ENCODE measurements at regions of chr16 and their contacts with region 1.

Region 1: GRCh38 chr16:62036101-62036801 is at the start of gene CDH8:
- DNase-seq: peak; percentile 93
- H3K4me3 ChIP-seq: peak within 1 kb of the TSS; percentile 64
- H3K27ac ChIP-seq: peak within 1 kb of the TSS; percentile 57
- H3K4me1 ChIP-seq: peaks cover 39% of the 10 kb centered on the region
- H3K27me3 ChIP-seq: no peaks in the 10 kb centered on the region
- CTCF ChIP-seq: no peak
- total RNA-seq, gene CDH8: 49.3 and 50.5 TPM in 2 replicates

Region 2: GRCh38 chr16:61432421-61432820 is 603.8 kb before region 1 on chr16:
- CTCF ChIA-PET with region 1: no interaction called
- POLR2A ChIA-PET with region 1: no interaction called
- intact Hi-C with region 1: loop called (anchors 5 kb)
- DNase-seq: peak; percentile 66
- H3K4me3 ChIP-seq: no peak overlapping the region
- H3K27ac ChIP-seq: no peak overlapping the region
- H3K4me1 ChIP-seq: no peaks in the 10 kb centered on the region
- H3K27me3 ChIP-seq: no peaks in the 10 kb centered on the region
- CTCF ChIP-seq: peak; percentile 59

Region 3: DNA sequence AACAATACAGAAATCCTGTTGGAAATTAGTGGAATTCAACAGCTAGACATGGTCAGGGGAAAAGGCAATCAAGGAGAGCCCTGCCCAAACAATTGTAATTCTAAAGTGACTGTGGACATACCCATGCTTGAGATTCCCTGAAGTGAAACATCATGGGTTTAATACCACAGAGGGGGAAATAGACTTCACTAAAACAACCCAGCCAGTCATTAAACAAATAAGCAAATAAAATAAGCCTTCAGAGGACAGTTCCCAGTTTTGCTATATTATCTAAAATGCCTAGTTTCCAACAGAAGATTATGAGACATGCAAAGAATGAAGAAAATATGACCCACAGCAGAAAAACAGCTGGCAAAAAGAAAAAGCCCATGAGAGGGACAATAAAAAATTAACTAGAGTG is 376.3 kb before region 1 on chr16:
- CTCF ChIA-PET with region 1: no interaction called
- POLR2A ChIA-PET with region 1: no interaction called
- intact Hi-C with region 1: loop called (anchors 10 kb)
- DNase-seq: no peak
- H3K4me3 ChIP-seq: no peak overlapping the region
- H3K27ac ChIP-seq: no peak overlapping the region
- H3K4me1 ChIP-seq: no peaks in the 10 kb centered on the region
- H3K27me3 ChIP-seq: no peaks in the 10 kb centered on the region
- CTCF ChIP-seq: no peak

Region 4: GRCh38 chr16:61862221-61863155 is 173.8 kb before region 1 on chr16:
- CTCF ChIA-PET with region 1: no interaction called
- POLR2A ChIA-PET with region 1: no interaction called
- intact Hi-C with region 1: loop called (anchors 5 kb)
- DNase-seq: no peak
- H3K4me3 ChIP-seq: no peak overlapping the region
- H3K27ac ChIP-seq: no peak overlapping the region
- H3K4me1 ChIP-seq: peaks cover 40% of the 10 kb centered on the region
- H3K27me3 ChIP-seq: no peaks in the 10 kb centered on the region
- CTCF ChIP-seq: no peak

Region 5: DNA sequence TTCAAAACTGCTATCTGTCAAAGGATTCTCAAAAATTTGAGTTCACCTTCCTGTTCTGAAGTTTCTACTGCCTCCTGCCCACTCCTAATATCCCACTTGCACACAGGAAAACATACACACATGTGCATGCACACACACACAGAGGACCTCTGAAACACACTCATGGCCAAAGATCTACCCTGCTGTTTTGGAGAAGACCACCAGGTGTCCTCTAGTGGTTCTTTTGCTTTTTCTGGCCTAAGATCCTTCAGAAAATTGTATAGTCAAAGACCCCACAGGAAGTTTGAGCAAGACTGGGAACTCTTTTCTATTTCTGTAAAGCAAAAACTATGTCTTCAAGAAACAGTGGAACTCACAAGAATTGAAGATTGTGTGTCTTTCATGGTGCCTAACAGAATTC is 90.2 kb before region 1 on chr16:
- CTCF ChIA-PET with region 1: no interaction called
- POLR2A ChIA-PET with region 1: no interaction called
- intact Hi-C with region 1: loop called (anchors 5 kb)
- DNase-seq: peak; percentile 38
- H3K4me3 ChIP-seq: no peak overlapping the region
- H3K27ac ChIP-seq: no peak overlapping the region
- H3K4me1 ChIP-seq: peaks cover 28% of the 10 kb centered on the region
- H3K27me3 ChIP-seq: no peaks in the 10 kb centered on the region
- CTCF ChIP-seq: peak; percentile 57

Region 6: DNA sequence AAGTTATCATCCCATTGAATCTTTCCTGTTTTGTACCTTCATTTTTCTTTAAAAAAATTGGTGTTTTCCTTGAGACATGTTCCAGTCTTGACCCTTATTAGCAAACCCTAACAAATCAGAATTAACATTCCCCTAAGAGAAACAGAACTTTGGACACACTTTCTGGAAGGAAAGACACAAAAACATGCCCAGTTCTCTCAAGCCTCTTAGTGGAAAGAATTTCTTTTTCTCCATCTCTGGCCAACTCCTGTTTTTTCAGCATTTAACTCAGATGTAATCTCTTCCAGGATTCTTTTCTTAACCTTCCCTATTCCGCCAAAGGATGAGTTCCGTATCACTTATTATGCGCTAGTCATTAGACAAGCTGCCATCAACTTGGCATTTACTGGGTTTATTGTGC is 23.8 kb after region 1 on chr16:
- CTCF ChIA-PET with region 1: no interaction called
- POLR2A ChIA-PET with region 1: no interaction called
- intact Hi-C with region 1: no loop called
- DNase-seq: no peak
- H3K4me3 ChIP-seq: no peak overlapping the region
- H3K27ac ChIP-seq: no peak overlapping the region
- H3K4me1 ChIP-seq: no peaks in the 10 kb centered on the region
- H3K27me3 ChIP-seq: no peaks in the 10 kb centered on the region
- CTCF ChIP-seq: no peak

Region 7: DNA sequence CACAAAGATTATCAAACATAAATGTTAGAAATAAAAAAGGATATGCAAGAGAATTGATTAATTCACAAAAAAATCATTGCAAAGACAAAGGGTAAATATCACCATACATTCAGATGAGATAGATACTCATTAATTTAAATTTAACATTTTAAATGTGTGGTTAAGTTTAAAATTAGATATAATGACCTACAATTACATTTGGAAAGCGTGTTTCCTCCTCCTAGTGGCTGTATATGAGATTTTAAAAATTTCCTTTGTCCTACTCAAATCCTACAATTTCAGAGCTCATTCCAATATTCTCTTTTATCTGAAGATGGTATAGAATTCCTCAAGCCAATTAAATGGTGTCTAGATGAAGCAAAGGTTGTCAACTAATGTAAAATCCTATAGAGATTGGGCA is 169.2 kb after region 1 on chr16:
- CTCF ChIA-PET with region 1: no interaction called
- POLR2A ChIA-PET with region 1: no interaction called
- intact Hi-C with region 1: no loop called
- DNase-seq: no peak
- H3K4me3 ChIP-seq: no peak overlapping the region
- H3K27ac ChIP-seq: no peak overlapping the region
- H3K4me1 ChIP-seq: no peaks in the 10 kb centered on the region
- H3K27me3 ChIP-seq: no peaks in the 10 kb centered on the region
- CTCF ChIP-seq: peak; percentile 36; the same call in 1 of the 2 replicates

Measured in A673 (cell line).